PC-3 (cell line): ENCODE measurements at regions of chr11 and their contacts with region 1.

Region 1: DNA sequence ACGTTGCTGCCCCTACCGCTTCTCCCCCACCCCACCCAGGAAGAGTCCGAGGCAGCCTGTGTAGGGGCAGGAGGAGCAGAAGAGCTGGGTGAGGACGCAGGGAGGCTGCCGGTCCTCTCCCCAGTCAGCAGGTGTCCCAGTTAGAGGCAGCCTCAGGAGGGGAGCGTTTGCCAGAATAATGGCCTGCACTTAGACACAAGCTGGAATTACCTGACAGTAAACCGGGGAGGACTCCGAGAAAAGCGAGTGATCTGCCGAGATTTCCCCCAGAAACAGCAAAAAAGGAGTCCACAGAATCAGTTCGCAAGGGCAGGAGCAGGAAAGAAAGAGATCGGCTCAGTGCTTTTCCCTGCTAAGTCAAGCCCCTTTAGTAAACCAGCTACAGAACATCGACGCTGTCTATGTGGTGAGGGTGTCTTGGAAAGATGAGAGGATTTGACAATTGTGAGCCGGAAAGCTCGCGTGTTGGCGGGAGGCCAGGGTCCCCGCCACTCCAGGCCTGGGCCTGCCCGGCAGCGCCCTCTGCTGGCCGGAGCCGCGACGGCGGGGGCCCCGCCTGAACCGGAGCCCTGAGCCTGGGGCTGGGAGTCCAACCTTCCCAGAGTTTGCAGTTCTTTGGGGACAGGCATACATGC is 17.7 kb upstream of the THRSP start:
- DNase-seq: peak; percentile 90
- ATAC-seq: peak; percentile 98
- H3K4me3 ChIP-seq: peak overlapping the region; percentile 67
- H3K27ac ChIP-seq: no peak overlapping the region
- H3K4me1 ChIP-seq: peaks cover 13% of the 10 kb centered on the region
- H3K27me3 ChIP-seq: no peaks in the 10 kb centered on the region
- CTCF ChIP-seq: peak; percentile 100

Region 2: DNA sequence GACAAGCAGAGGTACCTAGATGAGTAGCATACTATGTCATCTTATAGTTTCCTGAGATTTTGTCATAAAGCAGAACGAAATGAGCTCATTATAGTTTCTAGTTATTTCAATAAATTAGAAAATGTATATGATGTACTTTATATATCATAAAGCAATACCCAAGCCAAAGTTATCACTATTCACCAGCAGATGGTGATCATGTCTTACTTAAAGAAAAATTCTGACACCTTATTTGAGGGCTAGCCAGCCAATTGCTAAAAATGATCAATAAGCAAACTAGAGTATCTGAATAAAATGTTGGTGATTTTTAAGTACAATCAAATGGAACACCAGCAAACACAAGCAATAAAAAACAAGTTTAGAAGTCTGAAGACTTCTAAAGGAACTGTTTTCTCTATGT is 269.5 kb before region 1 on chr11:
- CTCF ChIA-PET with region 1: no interaction called
- POLR2A ChIA-PET with region 1: no interaction called
- intact Hi-C with region 1: loop called (anchors 1 kb)
- DNase-seq: peak; percentile 56
- ATAC-seq: no peak
- H3K4me3 ChIP-seq: no peak overlapping the region
- H3K27ac ChIP-seq: no peak overlapping the region
- H3K4me1 ChIP-seq: peaks cover 3% of the 10 kb centered on the region; the same call in 1 of the 2 replicates
- H3K27me3 ChIP-seq: no peaks in the 10 kb centered on the region
- CTCF ChIP-seq: peak; percentile 78

Region 3: DNA sequence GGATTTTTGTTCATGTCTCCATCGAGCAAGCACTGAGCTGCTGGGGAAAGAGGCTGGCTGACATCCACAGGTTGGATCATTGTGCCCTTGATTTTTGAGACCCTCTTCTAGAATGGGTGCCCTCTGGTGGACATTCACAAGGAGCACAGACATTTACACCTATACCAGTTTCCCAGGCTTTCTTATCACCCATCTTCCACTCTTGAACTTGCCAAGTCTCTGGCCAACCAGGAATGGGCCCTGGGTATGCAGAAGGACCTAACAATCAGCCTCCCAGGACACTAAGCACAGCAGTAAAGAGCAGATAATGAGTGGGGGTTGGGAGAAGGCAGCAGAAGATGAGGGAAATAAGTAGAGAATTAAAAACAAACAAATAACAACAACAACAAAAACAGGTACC is 45.8 kb before region 1 on chr11:
- CTCF ChIA-PET with region 1: interaction called, 5 read pairs
- POLR2A ChIA-PET with region 1: no interaction called
- intact Hi-C with region 1: loop called (anchors 1 kb)
- DNase-seq: peak; percentile 82
- ATAC-seq: peak; percentile 91
- H3K4me3 ChIP-seq: no peak overlapping the region
- H3K27ac ChIP-seq: no peak overlapping the region
- H3K4me1 ChIP-seq: peaks cover 4% of the 10 kb centered on the region; the same call in 1 of the 2 replicates
- H3K27me3 ChIP-seq: no peaks in the 10 kb centered on the region
- CTCF ChIP-seq: peak; percentile 89

Region 4: DNA sequence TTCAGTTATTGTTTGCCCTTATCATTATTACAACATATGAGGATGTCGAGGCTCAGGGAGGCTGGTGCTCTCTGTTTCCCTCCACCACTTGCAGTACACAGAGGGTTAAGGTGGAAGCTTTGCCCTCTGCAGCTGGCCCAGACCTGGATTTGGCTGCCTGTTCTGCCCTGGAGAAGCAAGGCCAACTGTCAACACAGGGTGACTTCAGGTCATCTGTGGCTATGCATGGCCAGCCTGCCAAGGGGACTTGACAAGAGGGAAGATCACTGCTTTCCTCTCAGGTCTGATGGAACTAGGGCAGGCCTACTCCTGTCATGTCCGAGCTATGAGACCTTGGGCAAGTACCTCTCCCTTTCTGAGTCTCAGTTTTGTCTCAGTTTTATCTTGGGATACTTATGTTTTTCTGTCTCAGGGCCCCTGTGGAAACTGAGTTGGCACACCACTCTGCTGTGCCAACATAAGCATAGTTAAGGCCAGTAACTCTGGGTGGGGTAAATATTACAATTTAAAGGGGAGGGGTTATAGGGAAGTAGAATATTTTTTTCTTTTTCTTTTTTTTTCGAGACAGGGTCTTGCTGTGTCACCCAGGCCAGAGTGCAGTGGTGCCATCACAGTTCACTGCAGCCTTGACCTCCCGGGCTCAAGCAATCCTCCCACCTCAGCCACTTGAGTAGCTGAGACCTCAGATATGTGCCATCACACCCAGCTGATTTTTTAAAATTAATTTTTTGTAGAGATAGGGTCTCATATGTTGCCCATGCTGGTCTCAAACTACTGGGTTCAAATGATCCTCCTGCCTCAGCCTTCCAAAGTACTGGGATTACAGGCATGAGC is 15.3 kb after region 1 on chr11:
- CTCF ChIA-PET with region 1: no interaction called
- POLR2A ChIA-PET with region 1: no interaction called
- intact Hi-C with region 1: no loop called
- DNase-seq: no peak
- ATAC-seq: no peak
- H3K4me3 ChIP-seq: no peak overlapping the region
- H3K27ac ChIP-seq: no peak overlapping the region
- H3K4me1 ChIP-seq: no peaks in the 10 kb centered on the region
- H3K27me3 ChIP-seq: no peaks in the 10 kb centered on the region
- CTCF ChIP-seq: no peak

Region 5: GRCh38 chr11:78149646-78150045 is 103.7 kb after region 1 on chr11:
- CTCF ChIA-PET with region 1: no interaction called
- POLR2A ChIA-PET with region 1: no interaction called
- intact Hi-C with region 1: no loop called
- DNase-seq: peak; percentile 92
- ATAC-seq: peak; percentile 100
- H3K4me3 ChIP-seq: no peak overlapping the region
- H3K27ac ChIP-seq: peak overlapping the region; percentile 72
- H3K4me1 ChIP-seq: peaks cover 8% of the 10 kb centered on the region
- H3K27me3 ChIP-seq: no peaks in the 10 kb centered on the region
- CTCF ChIP-seq: peak; percentile 76